CD14-positive monocyte (primary cell): ENCODE measurements at regions of chr20 and their contacts with region 1.

Region 1: DNA sequence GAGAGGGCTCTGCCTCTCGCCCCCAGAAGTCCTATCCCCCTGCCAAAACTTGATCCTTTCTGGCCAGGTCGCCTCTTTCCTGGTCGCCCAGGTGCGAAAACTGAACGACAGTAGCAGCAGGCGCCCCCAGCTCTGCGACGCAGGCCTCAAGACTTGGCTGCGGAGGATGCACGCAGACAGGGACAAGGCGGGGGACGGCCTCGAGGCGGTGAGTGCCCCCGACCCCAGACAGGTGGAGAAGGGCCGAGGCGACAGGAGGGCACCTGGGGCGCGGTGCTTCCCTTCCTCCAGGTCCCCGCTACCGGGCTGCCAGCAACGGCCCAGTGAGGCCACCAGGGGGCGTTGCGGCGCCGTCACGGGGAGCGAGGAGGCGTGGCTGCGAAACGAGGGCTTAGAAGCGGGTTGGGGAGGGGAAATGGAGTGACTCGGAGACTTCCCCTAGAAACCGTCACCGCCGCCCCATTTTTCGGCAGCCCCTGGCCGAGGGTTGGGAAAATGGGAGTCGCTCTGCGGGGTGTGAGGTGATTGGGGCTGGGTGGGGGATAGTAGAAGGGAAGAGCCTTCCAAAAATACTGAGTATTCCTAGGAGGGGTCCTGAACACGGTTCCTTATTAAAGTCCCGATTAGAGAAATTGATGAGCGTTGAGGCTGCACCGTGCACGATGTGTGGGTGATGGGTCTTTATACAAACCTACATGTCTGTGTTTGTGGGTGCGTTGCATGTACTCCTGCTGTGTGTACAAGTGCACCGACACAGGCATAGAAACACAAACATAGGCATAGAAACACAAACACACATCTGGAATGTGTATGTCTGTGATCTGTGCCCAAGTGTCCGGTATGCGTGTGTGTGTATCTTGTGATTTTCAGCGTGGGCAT is 44.6 kb downstream of the ARHGAP40 start:
- DNase-seq: peak; percentile 75 to 83 (median 77)
- H3K4me3 ChIP-seq: peak overlapping the region in 1 of 3 experiments; percentile 51
- H3K4me3 Mint-ChIP-seq: peak overlapping the region; percentile 65 to 82
- H3K27ac ChIP-seq: no peak overlapping the region
- H3K27ac Mint-ChIP-seq: peak overlapping the region in 3 of 7 donors; percentile 28 to 60 (median 45)
- H3K4me1 ChIP-seq: peaks cover 8 to 11% of the 10 kb centered on the region in 2 donors
- H3K4me1 Mint-ChIP-seq: peaks cover 9% of the 10 kb centered on the region
- H3K27me3 ChIP-seq: peaks cover 0 to 11% of the 10 kb centered on the region in 2 donors
- H3K27me3 Mint-ChIP-seq: peaks cover 30 to 42% (median 42%) of the 10 kb centered on the region in 3 donors
- CTCF ChIP-seq: peak; percentile 95

Region 2: GRCh38 chr20:38748097-38748860 is 102.1 kb after region 1 on chr20 and contains the start of gene ACTR5:
- intact Hi-C with region 1: loop called (anchors 5 kb)
- DNase-seq: peak; percentile 87 to 89 (median 88)
- H3K4me3 ChIP-seq: peak within 1 kb of the TSS; percentile 54 to 91 (median 58)
- H3K4me3 Mint-ChIP-seq: peak within 1 kb of the TSS; percentile 86 to 96
- H3K27ac ChIP-seq: peak within 1 kb of the TSS; percentile 81 to 95
- H3K27ac Mint-ChIP-seq: peak within 1 kb of the TSS; percentile 96 to 100 (median 100)
- H3K4me1 ChIP-seq: peaks cover 16 to 22% of the 10 kb centered on the region in 2 donors
- H3K4me1 Mint-ChIP-seq: peaks cover 19% of the 10 kb centered on the region
- H3K27me3 ChIP-seq: peaks cover 0 to 5% of the 10 kb centered on the region in 2 donors
- H3K27me3 Mint-ChIP-seq: peaks cover 9 to 20% (median 9%) of the 10 kb centered on the region in 3 donors
- CTCF ChIP-seq: no peak
- polyA plus RNA-seq, gene ACTR5: 6.6 to 15.6 (median 7.3) TPM

Region 3: GRCh38 chr20:38893565-38894090 is 247.4 kb after region 1 on chr20:
- intact Hi-C with region 1: loop called (anchors 2 to 5 kb)
- DNase-seq: peak; percentile 42 to 51 (median 47)
- H3K4me3 ChIP-seq: no peak overlapping the region
- H3K4me3 Mint-ChIP-seq: no peak overlapping the region
- H3K27ac ChIP-seq: no peak overlapping the region
- H3K27ac Mint-ChIP-seq: peak overlapping the region in 1 of 7 donors; percentile 73
- H3K4me1 ChIP-seq: no peaks in the 10 kb centered on the region
- H3K4me1 Mint-ChIP-seq: peaks cover 8% of the 10 kb centered on the region
- H3K27me3 ChIP-seq: no peaks in the 10 kb centered on the region
- H3K27me3 Mint-ChIP-seq: peaks cover 0 to 9% (median 2%) of the 10 kb centered on the region in 3 donors
- CTCF ChIP-seq: peak; percentile 89

Region 4: DNA sequence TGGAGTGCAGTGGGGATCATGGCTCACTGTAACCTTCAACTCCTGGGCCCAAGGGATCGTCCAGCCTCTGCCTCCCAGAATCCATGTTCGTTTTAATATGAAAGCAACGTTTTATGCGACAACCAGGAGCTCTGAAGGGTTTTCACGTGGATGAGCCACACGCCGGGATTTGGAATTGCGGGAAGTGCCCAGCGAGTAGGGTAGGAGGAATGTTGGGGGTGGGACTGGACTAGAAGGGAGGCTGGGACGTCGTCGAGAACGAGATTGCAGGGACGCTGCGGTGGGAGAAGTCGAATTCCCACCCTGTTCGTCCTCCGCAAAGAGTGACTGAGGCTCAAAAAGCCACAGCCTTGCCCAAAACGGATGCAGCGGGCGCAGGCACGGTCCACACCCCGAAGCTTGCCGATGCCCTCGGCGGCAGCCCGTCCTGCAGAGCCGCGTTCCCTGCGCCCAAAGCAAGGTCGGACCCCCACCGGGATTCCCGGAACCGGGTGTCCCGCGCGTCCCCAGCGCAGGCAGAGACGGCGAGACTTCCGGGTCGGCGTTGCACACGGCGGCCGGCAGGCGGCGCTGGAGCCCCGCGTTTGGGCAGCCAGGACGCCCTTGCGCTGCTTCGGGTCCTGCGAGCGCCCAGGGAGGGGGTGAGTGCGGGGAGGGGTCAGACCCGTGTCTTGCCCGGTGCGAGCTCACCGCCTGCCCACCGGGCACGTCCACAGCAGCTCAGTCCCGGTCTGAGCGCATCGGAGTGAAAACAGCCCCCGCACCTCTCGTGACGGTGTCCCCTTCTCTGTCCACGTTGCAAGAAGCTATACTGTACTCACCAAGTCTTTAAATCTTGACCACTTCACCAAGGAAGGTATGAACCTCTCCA is 403.7 kb after region 1 on chr20:
- intact Hi-C with region 1: loop called in 1 of 2 experiments (anchors 10 kb)
- DNase-seq: peak; percentile 60 to 72 (median 71)
- H3K4me3 ChIP-seq: peak overlapping the region; percentile 46 to 95 (median 68)
- H3K4me3 Mint-ChIP-seq: peak overlapping the region; percentile 89 to 97
- H3K27ac ChIP-seq: peak overlapping the region in 1 of 2 donors; percentile 64
- H3K27ac Mint-ChIP-seq: peak overlapping the region in 4 of 7 donors; percentile 14 to 76 (median 34)
- H3K4me1 ChIP-seq: peaks cover 9 to 13% of the 10 kb centered on the region in 2 donors
- H3K4me1 Mint-ChIP-seq: peaks cover 8% of the 10 kb centered on the region
- H3K27me3 ChIP-seq: no peaks in the 10 kb centered on the region
- H3K27me3 Mint-ChIP-seq: peaks cover 4 to 9% (median 5%) of the 10 kb centered on the region in 3 donors
- CTCF ChIP-seq: peak; percentile 99